Mammary epithelial cell (primary cell): ENCODE measurements at regions of chr5 and their contacts with region 1.

Region 1: GRCh38 chr5:87780831-87781760 is 368.4 kb upstream of the CCNH start:
- DNase-seq: peak; percentile 68
- H3K4me3 ChIP-seq: no peak overlapping the region
- H3K27ac ChIP-seq: no peak overlapping the region
- H3K4me1 ChIP-seq: peaks cover 12% of the 10 kb centered on the region
- H3K27me3 ChIP-seq: no peaks in the 10 kb centered on the region
- CTCF ChIP-seq: peak; percentile 92 to 94

Region 2: GRCh38 chr5:87541033-87541432 is 240.1 kb before region 1 on chr5:
- CTCF ChIA-PET with region 1: interaction called, 4 read pairs
- dilution Hi-C with region 1: no loop called
- in situ Hi-C with region 1: no loop called
- intact Hi-C with region 1: loop called (anchors 2 kb)
- DNase-seq: peak; percentile 63
- H3K4me3 ChIP-seq: no peak overlapping the region
- H3K27ac ChIP-seq: no peak overlapping the region
- H3K4me1 ChIP-seq: no peaks in the 10 kb centered on the region
- H3K27me3 ChIP-seq: no peaks in the 10 kb centered on the region
- CTCF ChIP-seq: peak; percentile 31 to 48

Region 3: GRCh38 chr5:87825583-87825982 is 44.5 kb after region 1 on chr5:
- CTCF ChIA-PET with region 1: no interaction called
- dilution Hi-C with region 1: no loop called
- in situ Hi-C with region 1: no loop called
- intact Hi-C with region 1: no loop called
- DNase-seq: no peak
- H3K4me3 ChIP-seq: no peak overlapping the region
- H3K27ac ChIP-seq: no peak overlapping the region
- H3K4me1 ChIP-seq: no peaks in the 10 kb centered on the region
- H3K27me3 ChIP-seq: no peaks in the 10 kb centered on the region
- CTCF ChIP-seq: no peak

Region 4: DNA sequence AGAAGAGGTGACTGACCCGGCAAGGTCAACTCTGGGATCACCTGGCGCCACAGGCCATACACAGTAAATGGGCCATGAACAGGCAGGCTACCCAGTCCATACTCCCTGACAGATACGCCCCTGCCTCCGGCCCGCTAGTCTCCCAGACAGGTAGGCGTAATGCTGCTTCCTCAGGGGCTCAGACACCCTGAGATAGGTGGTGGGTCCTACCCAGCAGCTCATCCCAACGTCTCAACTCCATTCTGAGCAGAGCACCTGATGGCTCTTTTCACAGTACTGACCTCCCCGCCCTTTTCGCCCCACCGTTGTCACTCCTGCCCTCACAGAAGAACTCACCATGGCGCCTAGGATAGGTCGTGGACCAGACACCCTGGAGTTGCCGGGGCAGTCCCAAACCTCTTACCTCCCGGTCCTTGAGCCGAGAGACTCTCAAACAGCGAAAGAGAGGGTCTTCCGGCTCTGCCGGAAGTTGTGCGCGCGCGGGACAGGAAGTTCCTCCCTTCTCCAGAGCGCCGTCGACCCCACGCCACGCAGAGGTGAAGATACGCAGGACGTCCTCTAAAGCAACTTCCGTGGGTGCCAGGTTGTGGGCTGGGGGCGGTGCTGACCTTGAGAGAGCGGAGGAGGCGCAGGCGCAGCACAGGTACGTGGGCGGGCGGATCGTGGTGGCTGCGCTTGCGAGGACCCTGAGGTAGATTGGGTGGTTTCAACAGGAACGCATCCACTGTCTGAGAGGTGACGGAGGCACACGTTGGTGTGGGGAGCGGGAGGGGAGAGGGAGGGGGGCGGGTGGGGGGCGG is 487.5 kb after region 1 on chr5 and contains the start of gene TMEM161B:
- CTCF ChIA-PET with region 1: no interaction called
- dilution Hi-C with region 1: no loop called
- in situ Hi-C with region 1: no loop called
- intact Hi-C with region 1: loop called (anchors 10 kb)
- DNase-seq: peak; percentile 92
- H3K4me3 ChIP-seq: peak within 1 kb of the TSS; percentile 61 to 93 (median 89)
- H3K27ac ChIP-seq: peak within 1 kb of the TSS; percentile 52
- H3K4me1 ChIP-seq: peaks cover 14% of the 10 kb centered on the region
- H3K27me3 ChIP-seq: no peaks in the 10 kb centered on the region
- CTCF ChIP-seq: no peak
- total RNA-seq, gene TMEM161B: 14.4 to 14.8 TPM

Region 5: DNA sequence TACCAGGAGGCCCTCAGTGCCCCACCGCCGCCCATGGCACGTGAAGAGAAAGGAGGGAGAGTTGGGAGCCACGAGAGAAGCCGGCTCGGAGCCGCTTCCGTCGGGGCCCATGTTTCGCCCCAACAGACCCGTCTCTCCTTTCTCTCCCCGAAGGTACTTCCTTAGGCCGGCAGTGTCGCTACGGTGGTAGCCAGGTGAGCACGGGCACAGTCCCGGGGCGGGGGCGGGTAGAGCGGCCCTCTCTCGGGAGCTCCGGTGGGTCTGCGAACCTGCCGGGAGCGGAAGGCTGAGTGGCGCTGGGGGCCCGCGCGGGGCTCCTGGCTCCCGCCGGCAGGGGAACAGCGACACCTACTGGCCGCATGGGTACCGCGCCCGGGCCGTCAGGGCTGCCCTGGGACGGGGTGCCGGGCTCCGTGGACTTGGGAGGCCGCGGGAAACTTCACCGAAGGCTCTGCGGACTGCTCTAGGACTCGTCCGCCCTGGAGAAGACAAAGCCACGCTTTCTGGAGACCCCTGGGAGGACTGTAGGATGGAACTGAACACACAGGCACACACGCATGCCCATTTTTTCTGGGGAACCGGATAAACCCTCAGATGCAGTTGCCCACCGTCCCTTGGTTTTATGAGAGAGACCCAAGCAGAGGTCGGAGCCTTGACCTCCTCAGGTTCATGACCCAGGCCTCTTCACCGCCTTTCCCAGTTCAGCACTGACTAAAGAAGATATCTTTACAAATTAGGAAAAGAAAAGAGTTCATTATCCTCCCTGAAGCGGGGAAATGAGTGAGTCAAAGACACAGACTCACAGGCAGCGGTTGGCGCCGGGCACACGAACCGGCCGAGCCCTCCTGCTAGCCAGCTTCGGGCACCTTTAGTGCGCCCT is 899.4 kb after region 1 on chr5:
- CTCF ChIA-PET with region 1: no interaction called
- dilution Hi-C with region 1: no loop called
- in situ Hi-C with region 1: loop called (anchors 10 to 25 kb)
- intact Hi-C with region 1: loop called (anchors 1 kb)
- DNase-seq: peak; percentile 35
- H3K4me3 ChIP-seq: peak overlapping the region; percentile 30 to 42 (median 41)
- H3K27ac ChIP-seq: no peak overlapping the region
- H3K4me1 ChIP-seq: peaks cover 8% of the 10 kb centered on the region
- H3K27me3 ChIP-seq: peaks cover 66% of the 10 kb centered on the region
- CTCF ChIP-seq: peak; percentile 55 to 97

Region 6: GRCh38 chr5:88724201-88724600 is 943.1 kb after region 1 on chr5:
- CTCF ChIA-PET with region 1: interaction called, 4 read pairs
- dilution Hi-C with region 1: no loop called
- in situ Hi-C with region 1: no loop called
- intact Hi-C with region 1: loop called (anchors 1 kb)
- DNase-seq: peak; percentile 18
- H3K4me3 ChIP-seq: no peak overlapping the region
- H3K27ac ChIP-seq: no peak overlapping the region
- H3K4me1 ChIP-seq: no peaks in the 10 kb centered on the region
- H3K27me3 ChIP-seq: no peaks in the 10 kb centered on the region
- CTCF ChIP-seq: peak; percentile 23 to 35